ENCODE measurements at regions of chr1 and their contacts with region 1.

Region 1: GRCh38 chr1:51729156-51729823 is 112.4 kb downstream of the OSBPL9 start:
- DNase-seq: peak; percentile 97
- ATAC-seq: peak; percentile 99
- H3K4me3 Mint-ChIP-seq: peak overlapping the region; percentile 83
- H3K27ac Mint-ChIP-seq: peak overlapping the region; percentile 87
- H3K4me1 Mint-ChIP-seq: peaks cover 25% of the 10 kb centered on the region
- H3K27me3 Mint-ChIP-seq: peaks cover 2% of the 10 kb centered on the region

Region 2: DNA sequence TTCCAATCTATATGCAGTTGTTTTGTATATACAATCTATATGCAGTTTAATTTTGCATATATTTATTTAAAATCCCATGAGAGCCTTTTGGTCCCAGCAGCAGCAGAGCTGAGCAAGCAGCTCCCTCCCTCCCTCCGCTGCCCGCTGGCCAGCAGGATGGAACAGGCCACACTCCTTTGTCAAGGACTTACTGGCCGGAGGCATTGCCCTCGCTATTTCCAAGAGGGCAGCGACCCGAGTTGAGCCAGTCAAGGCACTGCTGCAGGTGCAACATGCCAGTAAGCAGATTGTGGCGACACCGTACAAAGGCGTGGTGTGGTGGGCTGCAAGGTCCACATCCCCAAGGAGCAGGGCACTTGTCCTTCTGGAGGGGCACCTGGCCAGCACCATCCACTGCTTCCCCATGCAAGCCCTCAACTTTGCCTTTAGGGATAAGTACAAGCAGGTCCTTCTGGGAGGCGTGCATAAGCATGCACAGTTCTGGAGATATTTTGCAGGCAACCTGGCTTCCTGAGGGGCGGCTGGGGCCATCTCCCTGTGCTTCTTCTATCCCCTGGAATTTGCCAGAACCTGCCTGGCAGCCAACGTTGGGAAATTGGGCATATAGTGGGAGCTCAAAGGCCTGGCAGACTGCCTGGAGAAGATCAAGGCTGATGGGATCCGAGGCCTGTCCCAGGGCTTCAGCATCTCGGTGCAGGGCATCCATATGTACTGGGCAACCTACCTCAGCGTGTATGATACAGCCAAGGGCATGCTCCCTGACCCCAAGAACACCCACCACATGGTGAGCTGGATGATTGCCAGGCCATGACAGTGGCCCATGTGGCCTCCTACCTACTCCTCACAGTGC is 20.2 kb before region 1 on chr1:
- CTCF ChIA-PET with region 1: no interaction called
- POLR2A ChIA-PET with region 1: no interaction called
- DNase-seq: no peak
- ATAC-seq: no peak
- H3K4me3 Mint-ChIP-seq: no peak overlapping the region
- H3K27ac Mint-ChIP-seq: no peak overlapping the region
- H3K4me1 Mint-ChIP-seq: no peaks in the 10 kb centered on the region
- H3K27me3 Mint-ChIP-seq: no peaks in the 10 kb centered on the region

Region 3: GRCh38 chr1:51768971-51769588 is 39.8 kb after region 1 on chr1:
- CTCF ChIA-PET with region 1: interaction called, 16 read pairs
- POLR2A ChIA-PET with region 1: no interaction called
- DNase-seq: peak; percentile 40
- ATAC-seq: no peak
- H3K4me3 Mint-ChIP-seq: no peak overlapping the region
- H3K27ac Mint-ChIP-seq: no peak overlapping the region
- H3K4me1 Mint-ChIP-seq: no peaks in the 10 kb centered on the region
- H3K27me3 Mint-ChIP-seq: no peaks in the 10 kb centered on the region

Measured in activated CD8-positive, alpha-beta T cell treated with anti-CD3 and anti-CD28 coated beads, Interleukin-2, amount 10 ng/mL, durations not matched to agents 7 days and 5 days (primary cell).